Heart left ventricle (tissue), 16 donors: ENCODE measurements at regions of chr18 and their contacts with region 1.

Region 1: DNA sequence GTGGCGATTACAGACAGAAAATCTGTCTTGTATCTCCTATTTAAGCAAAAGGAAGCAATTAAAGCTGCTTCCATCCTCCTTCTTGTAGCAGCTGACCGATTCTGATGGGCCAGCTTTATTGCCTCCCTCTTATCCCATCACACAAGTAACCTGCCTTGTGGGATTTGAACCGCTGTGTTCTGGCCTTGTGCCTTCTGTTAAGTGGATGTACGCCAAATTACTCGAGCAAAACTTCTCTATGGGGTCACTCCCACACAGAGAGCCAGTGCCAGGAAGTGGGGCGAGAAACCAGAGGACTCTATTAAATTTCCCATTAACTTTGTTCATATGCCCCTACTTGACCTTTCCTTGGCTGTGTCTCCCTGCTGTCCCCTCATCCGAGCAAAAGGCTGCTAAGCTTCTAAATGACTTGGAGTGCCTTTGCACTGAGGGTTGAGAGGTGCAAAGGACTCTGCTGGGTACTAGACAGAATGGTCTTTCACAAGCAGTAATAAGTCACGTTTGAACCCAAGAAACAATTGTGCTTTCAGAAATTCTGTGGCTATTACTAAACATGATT is 672.5 kb downstream of the MBD2 start:
- DNase-seq: peak in 3 of 5 donors; percentile 10 to 35 (median 25)
- ATAC-seq: peak in 2 of 4 donors; percentile 33 to 34
- H3K4me3 ChIP-seq: no peak overlapping the region
- H3K27ac ChIP-seq: no peak overlapping the region
- H3K4me1 ChIP-seq: no peaks in the 10 kb centered on the region
- H3K27me3 ChIP-seq: no peaks in the 10 kb centered on the region
- CTCF ChIP-seq: no peak
- POLR2A ChIP-seq: no peak

Region 2: GRCh38 chr18:53490019-53490418 is 61.9 kb before region 1 on chr18:
- intact Hi-C with region 1: loop called in 1 of 10 experiments (anchors 10 kb)
- DNase-seq: no peak
- ATAC-seq: peak in 1 of 4 donors; percentile 20
- H3K4me3 ChIP-seq: no peak overlapping the region
- H3K27ac ChIP-seq: no peak overlapping the region
- H3K4me1 ChIP-seq: peaks cover 0 to 12% (median 0%) of the 10 kb centered on the region in 12 donors
- H3K27me3 ChIP-seq: no peaks in the 10 kb centered on the region
- CTCF ChIP-seq: no peak
- POLR2A ChIP-seq: no peak